ENCODE measurements at regions of chr14 and their contacts with region 1.

Region 1: GRCh38 chr14:50060871-50061663 is 55.3 kb downstream of the VCPKMT start:
- DNase-seq: peak; percentile 76
- H3K4me3 ChIP-seq: no peak overlapping the region
- H3K27ac ChIP-seq: peak overlapping the region; percentile 99
- H3K27me3 ChIP-seq: no peaks in the 10 kb centered on the region
- CTCF ChIP-seq: peak; percentile 34

Region 2: GRCh38 chr14:50013559-50014333 is 47.3 kb before region 1 on chr14:
- CTCF ChIA-PET with region 1: no interaction called
- POLR2A ChIA-PET with region 1: interaction called, 17 read pairs
- DNase-seq: no peak
- H3K4me3 ChIP-seq: no peak overlapping the region
- H3K27ac ChIP-seq: no peak overlapping the region
- H3K27me3 ChIP-seq: no peaks in the 10 kb centered on the region
- CTCF ChIP-seq: no peak

Region 3: GRCh38 chr14:50139192-50139591 is 78.1 kb after region 1 on chr14:
- CTCF ChIA-PET with region 1: no interaction called
- POLR2A ChIA-PET with region 1: no interaction called
- DNase-seq: no peak
- H3K4me3 ChIP-seq: no peak overlapping the region
- H3K27ac ChIP-seq: no peak overlapping the region
- H3K27me3 ChIP-seq: no peaks in the 10 kb centered on the region
- CTCF ChIP-seq: no peak

Region 4: GRCh38 chr14:50542941-50543418 is 481.9 kb after region 1 on chr14:
- CTCF ChIA-PET with region 1: no interaction called
- POLR2A ChIA-PET with region 1: no interaction called
- DNase-seq: no peak
- H3K4me3 ChIP-seq: no peak overlapping the region
- H3K27ac ChIP-seq: no peak overlapping the region
- H3K27me3 ChIP-seq: peaks cover 2% of the 10 kb centered on the region
- CTCF ChIP-seq: peak; percentile 60

Measured in AG04450 (cell line).